H1 (cell line): ENCODE measurements at regions of chr22 and their contacts with region 1.

Region 1: GRCh38 chr22:31995046-31995445 is 48.0 kb upstream of the SLC5A1 start:
- DNase-seq: no peak
- H3K4me3 ChIP-seq: no peak overlapping the region
- H3K27ac ChIP-seq: no peak overlapping the region
- H3K4me1 ChIP-seq: no peaks in the 10 kb centered on the region
- H3K27me3 ChIP-seq: no peaks in the 10 kb centered on the region; a peak in 1 of 7 replicates
- CTCF ChIP-seq: peak in 2 of 3 experiments; percentile 36 to 53; a peak in 2 of 4 replicates
- EP300 ChIP-seq: no peak
- POLR2A ChIP-seq: no peak
- RAD21 ChIP-seq: peak; percentile 19 to 32; a peak in 3 of 4 replicates

Region 2: GRCh38 chr22:31977141-31977841 is 17.8 kb before region 1 on chr22:
- CTCF ChIA-PET with region 1: interaction called, 53 read pairs
- POLR2A ChIA-PET with region 1: no interaction called
- DNase-seq: peak; percentile 72 to 96
- H3K4me3 ChIP-seq: no peak overlapping the region
- H3K27ac ChIP-seq: no peak overlapping the region
- H3K4me1 ChIP-seq: no peaks in the 10 kb centered on the region; a peak in 1 of 7 replicates
- H3K27me3 ChIP-seq: no peaks in the 10 kb centered on the region
- CTCF ChIP-seq: peak; percentile 76 to 94 (median 90)
- EP300 ChIP-seq: no peak
- POLR2A ChIP-seq: no peak
- RAD21 ChIP-seq: peak; percentile 98

Region 3: DNA sequence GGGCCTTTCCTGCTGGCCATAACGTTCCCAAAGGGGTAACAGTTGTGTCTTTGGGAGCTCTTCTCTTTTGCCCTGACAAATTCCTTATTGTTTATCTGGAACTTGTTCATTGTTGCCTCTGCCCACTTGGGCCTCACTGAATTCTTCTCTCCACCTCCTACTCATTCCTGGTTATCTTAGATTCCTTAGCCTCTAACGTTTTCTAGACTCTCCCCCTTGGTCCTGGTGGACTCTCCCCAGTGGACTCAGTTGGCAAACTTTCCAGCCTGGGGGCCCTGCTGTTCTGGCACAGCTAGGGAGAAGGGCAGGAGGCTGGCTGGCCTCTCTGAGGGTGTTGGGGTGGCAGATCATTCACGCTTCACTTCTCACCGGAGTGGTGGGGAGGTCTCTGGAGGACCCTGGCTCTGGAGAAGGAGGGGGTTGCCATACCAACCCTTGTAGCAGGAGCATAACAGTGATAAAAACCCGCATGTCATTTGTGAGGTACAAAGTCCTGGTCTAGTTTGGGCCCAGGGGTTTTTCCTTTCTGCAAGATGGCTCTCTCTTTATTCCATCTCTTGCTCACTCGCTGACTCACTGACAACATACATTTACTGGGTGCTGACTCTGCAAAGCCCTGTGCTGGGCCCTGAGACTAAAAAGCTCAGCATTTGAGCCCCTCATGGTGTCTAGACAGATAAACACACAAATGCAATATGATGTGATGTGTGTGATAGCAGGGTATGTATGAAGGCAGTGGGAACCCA is 11.0 kb before region 1 on chr22:
- CTCF ChIA-PET with region 1: interaction called, 53 read pairs
- POLR2A ChIA-PET with region 1: no interaction called
- DNase-seq: no peak
- H3K4me3 ChIP-seq: no peak overlapping the region
- H3K27ac ChIP-seq: no peak overlapping the region
- H3K4me1 ChIP-seq: no peaks in the 10 kb centered on the region
- H3K27me3 ChIP-seq: no peaks in the 10 kb centered on the region; a peak in 2 of 7 replicates
- CTCF ChIP-seq: no peak
- EP300 ChIP-seq: no peak
- POLR2A ChIP-seq: no peak
- RAD21 ChIP-seq: no peak

Region 4: DNA sequence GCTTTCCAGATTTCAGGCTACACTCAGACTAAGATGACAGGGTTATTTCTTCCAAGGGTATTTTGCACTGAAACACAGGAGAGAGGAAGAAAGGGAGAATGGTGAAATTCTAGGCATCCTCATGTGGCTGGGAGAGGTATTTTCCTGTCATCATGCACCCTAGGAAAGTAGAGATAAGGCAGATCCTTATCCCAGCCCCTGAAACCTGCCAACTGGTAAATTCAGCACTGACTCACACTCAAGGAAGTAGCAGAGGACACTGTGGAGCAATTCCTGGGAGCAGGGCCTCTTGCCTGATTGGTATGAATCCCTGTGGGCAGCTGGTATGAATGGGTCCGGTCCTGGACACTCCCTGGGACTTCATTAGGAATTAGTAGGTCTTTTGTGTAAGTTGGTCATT is 10.4 kb after region 1 on chr22:
- CTCF ChIA-PET with region 1: interaction called, 17 read pairs
- POLR2A ChIA-PET with region 1: no interaction called
- DNase-seq: no peak
- H3K4me3 ChIP-seq: no peak overlapping the region
- H3K27ac ChIP-seq: no peak overlapping the region
- H3K4me1 ChIP-seq: no peaks in the 10 kb centered on the region
- H3K27me3 ChIP-seq: peaks cover 0 to 2% (median 0%) of the 10 kb centered on the region in 4 experiments; a peak in 1 of 7 replicates
- CTCF ChIP-seq: no peak
- EP300 ChIP-seq: no peak
- POLR2A ChIP-seq: no peak
- RAD21 ChIP-seq: no peak

Region 5: DNA sequence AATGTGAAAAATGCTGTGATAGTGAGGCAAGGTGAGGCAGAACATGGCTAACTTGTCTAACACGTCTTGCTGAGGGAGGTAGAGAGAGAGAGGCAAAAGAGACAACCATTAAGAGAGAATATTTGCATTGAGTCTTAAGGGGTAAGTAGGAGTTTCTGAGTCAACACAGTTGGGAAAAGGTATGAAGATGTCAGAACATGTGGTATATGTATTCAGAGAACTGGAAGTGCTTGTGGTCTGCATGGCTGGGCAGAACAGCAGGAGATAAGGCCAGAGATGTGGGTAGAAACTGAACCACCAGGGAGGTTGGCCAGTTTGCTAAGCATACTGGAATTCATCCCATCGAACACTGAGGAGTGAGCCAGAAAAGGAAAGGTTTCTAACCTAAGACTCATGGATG is 23.0 kb after region 1 on chr22:
- CTCF ChIA-PET with region 1: interaction called, 12 read pairs
- POLR2A ChIA-PET with region 1: no interaction called
- DNase-seq: no peak
- H3K4me3 ChIP-seq: no peak overlapping the region
- H3K27ac ChIP-seq: no peak overlapping the region
- H3K4me1 ChIP-seq: no peaks in the 10 kb centered on the region
- H3K27me3 ChIP-seq: no peaks in the 10 kb centered on the region
- CTCF ChIP-seq: no peak
- EP300 ChIP-seq: no peak
- POLR2A ChIP-seq: no peak
- RAD21 ChIP-seq: no peak

Region 6: DNA sequence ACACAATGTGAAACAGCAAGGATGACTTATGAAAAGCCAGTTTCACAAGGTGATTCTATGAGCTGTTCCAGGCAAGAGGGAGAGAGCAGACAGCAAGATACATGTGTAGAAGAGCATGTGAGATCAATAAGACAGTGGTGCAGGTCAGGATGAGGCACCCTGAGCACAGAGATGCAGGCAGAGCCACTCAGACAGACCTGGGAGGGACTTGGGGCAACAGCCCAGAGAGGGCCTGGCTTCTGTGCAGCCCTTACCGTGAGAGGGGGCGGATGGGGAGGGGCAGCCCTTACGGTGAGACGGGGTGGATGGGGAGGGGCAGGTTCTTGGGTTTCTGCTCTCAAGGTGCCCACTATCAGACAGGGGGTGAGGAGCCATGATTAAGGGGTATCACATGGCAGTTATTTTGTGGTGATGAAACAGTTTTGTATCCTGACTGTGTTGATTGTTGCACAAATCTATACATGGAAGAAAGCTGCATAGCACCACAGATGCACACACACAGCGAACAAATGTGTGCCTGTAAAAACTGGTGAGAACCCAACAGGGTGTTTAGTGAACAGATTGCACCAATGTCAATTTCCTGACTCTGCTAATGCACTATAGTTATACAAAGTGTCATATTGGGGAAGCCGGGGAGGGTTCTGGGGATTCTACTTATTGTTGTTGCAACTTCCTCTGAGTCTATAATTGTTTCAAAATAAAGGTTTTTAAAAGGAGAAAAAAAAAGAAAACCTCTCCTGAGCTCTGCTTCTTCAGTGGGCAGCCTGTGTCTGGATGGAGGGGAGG is 169.2 kb after region 1 on chr22:
- CTCF ChIA-PET with region 1: no interaction called
- POLR2A ChIA-PET with region 1: no interaction called
- DNase-seq: no peak
- H3K4me3 ChIP-seq: no peak overlapping the region
- H3K27ac ChIP-seq: no peak overlapping the region
- H3K4me1 ChIP-seq: peaks cover 0 to 3% (median 0%) of the 10 kb centered on the region in 4 experiments; a peak in 3 of 7 replicates
- H3K27me3 ChIP-seq: no peaks in the 10 kb centered on the region
- CTCF ChIP-seq: no peak
- EP300 ChIP-seq: no peak
- POLR2A ChIP-seq: no peak
- RAD21 ChIP-seq: no peak